Esophagus muscularis mucosa (tissue), 4 donors: ENCODE measurements at regions of chr5 and their contacts with region 1.

Region 1: DNA sequence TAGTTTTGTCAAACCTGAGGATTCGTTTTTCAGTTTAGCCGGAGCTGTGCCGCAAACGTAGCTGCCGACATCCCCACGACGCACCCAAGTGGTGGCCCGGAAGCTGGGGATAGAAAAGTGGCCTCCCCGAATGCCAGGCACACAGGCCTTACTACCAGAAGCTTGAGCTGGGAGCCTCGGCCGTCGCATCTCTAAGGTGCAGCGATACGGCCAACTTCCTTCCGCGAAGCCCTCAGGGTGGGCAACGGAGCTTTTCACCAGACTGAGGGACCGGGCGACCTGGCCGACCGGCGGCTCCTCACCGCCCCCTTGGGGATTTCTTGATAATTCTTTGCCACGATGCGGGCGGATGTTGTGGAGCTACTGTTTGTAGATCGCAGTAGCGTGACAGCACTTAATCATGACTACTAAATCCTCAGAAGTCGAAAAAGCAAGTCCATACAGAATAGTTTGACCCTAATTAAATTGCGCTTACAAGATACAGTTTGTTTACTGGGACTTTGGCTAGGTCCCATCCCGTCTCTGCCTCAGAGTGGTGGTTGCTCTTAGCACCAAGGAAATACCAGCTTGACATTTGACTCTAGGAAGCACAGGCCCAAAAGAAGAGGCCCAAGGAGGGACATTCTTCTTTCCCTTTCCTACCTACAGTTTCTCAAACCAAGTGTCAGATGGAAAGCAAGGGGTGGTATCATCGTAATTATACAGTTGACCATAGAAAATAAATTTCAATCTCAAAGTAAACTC is 613 bp upstream of the TMEM267 start:
- DNase-seq: peak; percentile 96
- H3K4me3 ChIP-seq: peak overlapping the region; percentile 76 to 89 (median 84)
- H3K27ac ChIP-seq: peak overlapping the region; percentile 91 to 97 (median 95)
- H3K4me1 ChIP-seq: peaks cover 14 to 31% (median 22%) of the 10 kb centered on the region in 4 donors
- H3K27me3 ChIP-seq: no peaks in the 10 kb centered on the region
- CTCF ChIP-seq: peak; percentile 68 to 79 (median 72)
- EP300 ChIP-seq: no peak
- POLR2A ChIP-seq: no peak

Region 2: DNA sequence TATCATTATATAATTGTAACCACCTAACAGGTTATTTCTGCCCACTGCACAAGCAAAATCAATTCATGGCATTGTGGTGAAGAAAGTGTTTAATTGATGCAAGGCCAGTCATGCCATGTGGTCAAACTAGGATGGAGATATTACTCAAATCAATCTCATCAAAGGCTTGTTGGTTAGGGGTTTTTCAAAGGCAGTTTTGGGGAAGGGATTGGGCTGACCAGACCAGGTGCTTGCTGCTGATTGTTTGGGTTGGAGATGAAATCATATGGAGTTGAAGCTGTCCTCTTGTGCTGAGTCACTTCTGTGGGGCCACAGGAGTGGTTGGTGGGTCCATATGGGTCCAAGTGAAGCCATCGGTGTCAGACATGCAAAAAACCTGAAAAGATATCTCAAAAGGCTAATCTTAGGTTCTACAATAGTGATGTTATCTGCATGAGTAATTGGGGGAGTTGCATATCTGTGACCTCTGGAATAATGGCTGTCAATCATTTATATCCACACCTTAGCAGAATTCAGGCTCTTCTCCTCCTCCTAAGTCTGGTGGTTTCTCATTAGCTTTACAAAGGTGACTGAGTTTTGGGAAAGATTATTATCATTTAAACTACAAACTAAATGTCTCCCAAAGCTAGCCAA is 216.0 kb before region 1 on chr5:
- intact Hi-C with region 1: no loop called
- DNase-seq: no peak
- H3K4me3 ChIP-seq: no peak overlapping the region
- H3K27ac ChIP-seq: no peak overlapping the region
- H3K4me1 ChIP-seq: no peaks in the 10 kb centered on the region
- H3K27me3 ChIP-seq: no peaks in the 10 kb centered on the region
- CTCF ChIP-seq: no peak
- EP300 ChIP-seq: no peak
- POLR2A ChIP-seq: no peak

Region 3: GRCh38 chr5:43396762-43397304 is 87.4 kb before region 1 on chr5:
- intact Hi-C with region 1: loop called (anchors 5 kb)
- DNase-seq: peak; percentile 91
- H3K4me3 ChIP-seq: peak overlapping the region; percentile 61 to 75 (median 63)
- H3K27ac ChIP-seq: peak overlapping the region; percentile 52 to 75 (median 62)
- H3K4me1 ChIP-seq: peaks cover 5 to 15% (median 8%) of the 10 kb centered on the region in 4 donors
- H3K27me3 ChIP-seq: no peaks in the 10 kb centered on the region
- CTCF ChIP-seq: no peak
- EP300 ChIP-seq: no peak
- POLR2A ChIP-seq: no peak